Activated T-helper 1 cell treated with anti-CD3 and anti-CD28 coated beads, Interleukin-12 subunit alpha, Interleukin-12 subunit beta, Interleukin-2, Interleukin-4 antibody, amounts not matched to agents 30 ng/mL and 10 ng/mL and 1 ng/mL, durations not matched to agents 14 hours and 24 hours and 36 hours (primary cell): ENCODE measurements at regions of chr6 and their contacts with region 1.

Region 1: DNA sequence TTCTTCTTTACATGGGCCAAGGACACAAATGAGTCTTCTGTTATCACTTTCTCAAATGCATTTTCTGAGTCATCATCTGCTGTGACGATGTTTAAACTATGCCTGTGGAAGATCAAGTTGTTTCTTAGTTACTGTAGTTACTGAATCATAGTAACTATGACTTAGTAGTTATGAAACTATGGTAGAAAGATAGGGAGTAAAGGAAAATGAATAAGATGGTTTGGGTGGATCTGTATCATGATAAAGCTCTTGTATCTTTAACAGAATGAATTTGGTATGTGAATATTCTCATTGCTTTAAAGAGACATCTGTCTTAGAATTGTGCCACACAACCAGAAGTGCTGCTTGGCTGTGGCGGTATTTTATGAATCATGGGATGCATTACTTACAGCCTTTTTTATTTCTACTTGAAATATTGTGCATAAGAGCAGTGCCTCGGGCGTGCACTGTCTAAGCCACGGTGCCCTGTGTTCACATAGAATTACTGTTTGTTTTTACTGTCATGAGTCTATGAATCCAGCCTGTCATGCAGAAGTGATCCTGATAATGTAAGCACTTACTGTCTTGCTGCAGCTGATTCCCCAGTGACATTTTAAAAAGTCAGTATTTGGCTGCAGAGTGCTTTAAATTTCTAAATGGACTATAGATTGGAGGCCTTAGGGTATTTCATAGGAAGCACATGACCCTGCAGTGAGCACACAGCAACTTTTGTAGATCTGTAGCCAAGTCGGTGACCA is 215.2 kb downstream of the TMEM242 start:
- DNase-seq: no peak
- H3K4me3 Mint-ChIP-seq: no peak overlapping the region
- H3K27ac Mint-ChIP-seq: peak overlapping the region; percentile 73
- H3K4me1 Mint-ChIP-seq: peaks cover 55% of the 10 kb centered on the region
- H3K27me3 Mint-ChIP-seq: no peaks in the 10 kb centered on the region

Region 2: GRCh38 chr6:157054531-157054979 is 53.5 kb before region 1 on chr6:
- intact Hi-C with region 1: loop called (anchors 1 kb)
- DNase-seq: peak; percentile 35
- H3K4me3 Mint-ChIP-seq: peak overlapping the region; percentile 53
- H3K27ac Mint-ChIP-seq: peak overlapping the region; percentile 95
- H3K4me1 Mint-ChIP-seq: peaks cover 33% of the 10 kb centered on the region
- H3K27me3 Mint-ChIP-seq: no peaks in the 10 kb centered on the region

Region 3: DNA sequence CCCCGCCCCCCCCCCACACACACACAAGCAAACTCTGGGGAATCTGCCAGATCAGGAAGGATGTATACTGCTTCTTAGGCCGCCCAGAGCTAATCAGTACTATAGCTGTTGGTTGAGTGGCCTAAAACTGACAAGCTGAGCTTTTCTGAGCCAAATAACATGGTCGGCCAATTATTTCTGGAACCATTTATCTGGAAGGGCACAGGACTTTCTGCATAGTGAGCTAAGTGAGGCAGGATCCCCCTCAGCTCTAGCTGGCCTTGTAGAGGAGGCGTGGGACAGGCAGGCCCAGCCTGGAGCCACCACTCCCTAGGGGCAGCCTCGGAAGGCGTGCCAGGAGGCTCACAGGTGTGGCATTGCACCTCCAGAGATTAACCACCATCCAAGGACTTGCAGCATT is 15.2 kb after region 1 on chr6:
- intact Hi-C with region 1: loop called (anchors 1 kb)
- DNase-seq: no peak
- H3K4me3 Mint-ChIP-seq: no peak overlapping the region
- H3K27ac Mint-ChIP-seq: no peak overlapping the region
- H3K4me1 Mint-ChIP-seq: peaks cover 8% of the 10 kb centered on the region
- H3K27me3 Mint-ChIP-seq: no peaks in the 10 kb centered on the region

Region 4: DNA sequence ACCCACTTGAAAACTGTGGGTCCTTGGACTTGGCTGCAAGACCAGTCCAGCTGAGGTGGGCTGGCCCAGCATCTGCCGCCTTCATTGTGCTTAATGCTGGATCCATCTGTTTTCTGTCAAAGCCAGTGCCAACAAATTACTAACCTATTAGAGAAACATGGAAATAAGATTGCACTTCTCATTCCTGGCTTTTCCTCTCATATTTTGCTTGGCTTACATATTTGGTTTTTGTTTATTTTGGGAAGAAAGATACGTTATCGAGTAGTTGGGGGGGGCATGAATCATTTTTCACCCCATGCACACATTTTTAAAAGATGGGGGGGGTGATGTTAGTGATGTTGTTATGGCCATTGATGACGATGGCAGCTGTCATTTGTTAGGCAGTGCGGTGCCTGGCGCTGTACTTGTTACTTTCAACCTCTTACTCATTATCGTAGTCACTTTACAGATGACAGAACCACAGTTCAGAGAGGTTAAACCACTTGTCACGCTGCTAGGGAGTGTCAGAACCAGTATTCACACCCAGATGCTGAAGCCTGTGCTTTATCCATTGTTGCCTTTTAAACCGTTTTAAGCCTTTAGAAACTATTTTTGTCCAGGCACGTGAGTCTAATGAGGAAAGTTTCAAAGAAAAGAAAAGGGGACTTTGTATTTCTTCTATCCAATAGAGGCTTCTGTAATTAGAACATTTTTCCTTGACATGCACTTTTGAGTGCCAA is 35.2 kb after region 1 on chr6:
- intact Hi-C with region 1: loop called (anchors 2 kb)
- DNase-seq: no peak
- H3K4me3 Mint-ChIP-seq: no peak overlapping the region
- H3K27ac Mint-ChIP-seq: no peak overlapping the region
- H3K4me1 Mint-ChIP-seq: peaks cover 12% of the 10 kb centered on the region
- H3K27me3 Mint-ChIP-seq: no peaks in the 10 kb centered on the region